ENCODE measurements at regions of chr3 and their contacts with region 1.

Region 1: DNA sequence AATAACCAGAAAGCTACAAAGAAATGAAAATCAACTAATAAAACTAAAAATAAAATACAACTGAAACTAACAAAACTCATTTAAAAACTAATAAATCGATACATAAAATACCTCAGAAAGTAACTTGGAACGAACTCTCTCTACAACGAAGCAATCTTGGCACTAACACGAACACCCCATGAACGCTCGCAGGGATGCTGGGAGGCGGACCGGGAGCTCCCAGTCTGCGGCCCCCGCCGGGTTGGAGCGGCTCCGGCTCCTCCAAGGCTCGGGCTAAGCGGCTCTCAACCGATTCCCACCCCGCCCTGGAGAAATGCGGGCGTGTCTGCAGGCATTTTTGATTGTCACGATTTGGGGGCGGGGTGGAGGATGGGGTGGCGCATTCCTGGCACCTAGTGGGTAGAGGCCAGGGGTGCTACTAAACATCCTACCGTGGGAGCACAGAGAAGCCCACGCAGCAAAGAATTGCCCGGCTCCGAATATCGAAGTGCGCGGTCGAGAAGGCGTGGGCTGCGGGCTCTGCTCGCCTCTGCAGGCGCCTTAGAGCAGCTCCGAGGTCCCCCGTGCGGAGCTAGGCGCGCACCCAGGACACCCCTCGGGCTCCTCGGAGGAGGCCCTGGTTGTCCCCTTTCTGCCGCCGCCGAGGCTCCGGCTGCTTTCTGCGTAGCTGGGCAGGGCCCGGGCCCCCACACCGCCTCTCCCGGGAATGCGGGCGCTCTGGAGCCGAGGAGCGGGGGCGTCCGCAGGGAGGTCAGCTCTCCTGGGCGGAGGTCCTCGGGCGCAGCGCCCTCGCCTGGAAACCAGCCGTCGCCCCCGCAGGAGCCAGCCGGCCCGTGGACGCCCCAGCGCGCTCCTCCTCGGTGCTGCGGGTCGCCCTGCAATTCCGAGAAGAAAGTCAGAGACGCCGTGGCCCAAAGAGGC is 16.4 kb upstream of the LAMP3 start:
- DNase-seq: no peak
- H3K4me3 ChIP-seq: peak overlapping the region; percentile 58
- H3K27ac ChIP-seq: no peak overlapping the region
- H3K27me3 ChIP-seq: peaks cover 29% of the 10 kb centered on the region
- CTCF ChIP-seq: no peak

Region 2: GRCh38 chr3:183073839-183074238 is 105.0 kb before region 1 on chr3:
- CTCF ChIA-PET with region 1: no interaction called
- POLR2A ChIA-PET with region 1: no interaction called
- DNase-seq: no peak
- H3K4me3 ChIP-seq: no peak overlapping the region
- H3K27ac ChIP-seq: no peak overlapping the region
- H3K27me3 ChIP-seq: no peaks in the 10 kb centered on the region
- CTCF ChIP-seq: no peak

Region 3: DNA sequence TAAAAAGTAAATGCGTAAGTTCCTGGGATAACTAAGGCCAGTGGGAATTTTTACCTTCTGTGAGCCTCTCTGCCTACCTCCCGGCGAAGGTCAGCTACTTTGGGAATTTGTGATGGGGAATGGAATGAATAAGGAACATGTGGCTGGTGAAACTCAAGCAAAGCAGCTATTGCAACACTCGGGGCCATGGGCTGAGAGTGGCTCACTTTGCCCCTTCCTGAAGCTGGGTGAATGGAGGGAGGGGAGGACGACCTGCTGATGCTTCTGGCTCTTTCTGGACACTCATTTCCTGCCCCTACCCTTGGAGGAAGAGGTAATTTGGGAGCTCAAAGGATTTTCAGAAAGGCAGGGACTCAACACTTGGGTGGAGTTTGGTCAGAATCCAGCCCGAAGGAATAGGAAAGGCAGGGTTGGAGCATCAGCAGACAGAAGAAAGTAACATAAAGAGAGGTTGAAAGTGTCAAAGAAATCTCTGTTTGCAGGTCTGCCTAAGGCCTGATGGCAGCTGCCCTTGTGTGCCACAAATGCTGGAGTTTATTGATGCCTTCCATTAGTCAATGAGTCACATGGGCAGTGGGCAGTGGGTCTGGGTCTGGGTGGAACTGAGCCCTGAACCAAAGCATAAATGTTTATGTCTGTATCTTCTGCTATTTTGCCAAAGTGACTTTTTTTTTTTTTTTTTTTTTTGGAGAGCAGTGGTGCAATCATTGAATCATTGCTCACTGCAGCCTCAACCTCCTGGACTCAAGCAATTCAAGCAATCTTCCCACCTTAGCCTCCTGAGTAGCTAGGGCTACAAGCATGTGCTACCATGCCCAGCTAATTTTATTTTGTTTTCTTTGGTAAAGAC is 28.8 kb before region 1 on chr3:
- CTCF ChIA-PET with region 1: no interaction called
- POLR2A ChIA-PET with region 1: interaction called, 12 read pairs
- DNase-seq: no peak
- H3K4me3 ChIP-seq: no peak overlapping the region
- H3K27ac ChIP-seq: no peak overlapping the region
- H3K27me3 ChIP-seq: peaks cover 15% of the 10 kb centered on the region
- CTCF ChIP-seq: no peak

Region 4: GRCh38 chr3:183265834-183266417 is 87.0 kb after region 1 on chr3:
- CTCF ChIA-PET with region 1: no interaction called
- POLR2A ChIA-PET with region 1: no interaction called
- DNase-seq: peak; percentile 10
- H3K4me3 ChIP-seq: no peak overlapping the region
- H3K27ac ChIP-seq: no peak overlapping the region
- H3K27me3 ChIP-seq: no peaks in the 10 kb centered on the region
- CTCF ChIP-seq: no peak

Region 5: GRCh38 chr3:183385698-183386613 is 207.1 kb after region 1 on chr3:
- CTCF ChIA-PET with region 1: interaction called, 432 read pairs
- POLR2A ChIA-PET with region 1: no interaction called
- DNase-seq: peak; percentile 49
- H3K4me3 ChIP-seq: no peak overlapping the region
- H3K27ac ChIP-seq: no peak overlapping the region
- H3K27me3 ChIP-seq: peaks cover 22% of the 10 kb centered on the region
- CTCF ChIP-seq: peak; percentile 75

Measured in AG04450 (cell line).